Posterior cingulate gyrus (tissue), 11 donors: ENCODE measurements at regions of chr11 and their contacts with region 1.

Region 1: DNA sequence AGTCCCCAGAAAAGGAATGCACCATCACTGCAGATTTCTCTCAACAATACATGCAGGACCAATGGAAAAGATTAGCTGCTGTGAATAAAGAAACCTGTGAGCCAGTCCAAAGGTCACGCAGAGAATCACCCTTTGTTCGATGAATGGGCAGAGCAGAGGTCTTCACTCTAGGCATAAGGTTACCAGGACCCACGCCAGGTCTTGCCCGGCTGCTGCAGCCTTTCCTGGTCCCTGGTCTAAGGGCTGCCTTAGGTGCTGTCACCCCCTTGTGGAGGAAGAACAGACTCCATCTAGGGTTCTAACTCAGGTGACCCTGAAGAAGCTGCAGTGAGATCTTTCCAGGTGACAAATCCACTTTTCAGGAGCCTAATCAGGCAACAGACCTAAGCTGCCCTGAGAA is 29.0 kb upstream of the NAP1L4 start:
- DNase-seq: peak in 5 of 10 donors; percentile 53 to 91 (median 56)

Region 2: DNA sequence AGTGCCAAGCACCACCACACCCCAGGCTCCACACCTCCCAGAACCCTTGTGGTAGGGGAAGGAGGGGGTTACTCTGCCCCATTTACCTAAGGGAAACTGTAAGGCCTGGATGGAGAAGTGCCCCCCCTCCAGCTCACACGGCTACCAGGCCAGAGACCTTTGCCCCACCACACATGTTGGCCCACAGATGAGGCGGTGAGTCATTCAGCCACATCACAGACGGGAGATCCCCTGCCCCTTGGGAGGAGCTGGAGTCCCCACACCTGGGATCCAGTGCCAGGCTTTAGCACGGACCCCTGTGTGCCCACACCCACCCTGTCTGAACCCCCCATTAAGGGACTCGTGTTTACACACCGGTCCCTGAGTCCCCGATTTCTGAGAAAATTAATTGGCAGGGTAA is 160.5 kb before region 1 on chr11:
- intact Hi-C with region 1: no loop called
- DNase-seq: no peak

Region 3: GRCh38 chr11:2975594-2975993 is 45.5 kb before region 1 on chr11:
- intact Hi-C with region 1: loop called (anchors 1 kb)
- DNase-seq: peak in 6 of 10 donors; percentile 28 to 86 (median 52)

Region 4: GRCh38 chr11:2982214-2982613 is 38.9 kb before region 1 on chr11:
- intact Hi-C with region 1: loop called (anchors 2 kb)
- DNase-seq: no peak